Left colon (tissue), 2 donors: ENCODE measurements at regions of chr4 and their contacts with region 1.

Region 1: DNA sequence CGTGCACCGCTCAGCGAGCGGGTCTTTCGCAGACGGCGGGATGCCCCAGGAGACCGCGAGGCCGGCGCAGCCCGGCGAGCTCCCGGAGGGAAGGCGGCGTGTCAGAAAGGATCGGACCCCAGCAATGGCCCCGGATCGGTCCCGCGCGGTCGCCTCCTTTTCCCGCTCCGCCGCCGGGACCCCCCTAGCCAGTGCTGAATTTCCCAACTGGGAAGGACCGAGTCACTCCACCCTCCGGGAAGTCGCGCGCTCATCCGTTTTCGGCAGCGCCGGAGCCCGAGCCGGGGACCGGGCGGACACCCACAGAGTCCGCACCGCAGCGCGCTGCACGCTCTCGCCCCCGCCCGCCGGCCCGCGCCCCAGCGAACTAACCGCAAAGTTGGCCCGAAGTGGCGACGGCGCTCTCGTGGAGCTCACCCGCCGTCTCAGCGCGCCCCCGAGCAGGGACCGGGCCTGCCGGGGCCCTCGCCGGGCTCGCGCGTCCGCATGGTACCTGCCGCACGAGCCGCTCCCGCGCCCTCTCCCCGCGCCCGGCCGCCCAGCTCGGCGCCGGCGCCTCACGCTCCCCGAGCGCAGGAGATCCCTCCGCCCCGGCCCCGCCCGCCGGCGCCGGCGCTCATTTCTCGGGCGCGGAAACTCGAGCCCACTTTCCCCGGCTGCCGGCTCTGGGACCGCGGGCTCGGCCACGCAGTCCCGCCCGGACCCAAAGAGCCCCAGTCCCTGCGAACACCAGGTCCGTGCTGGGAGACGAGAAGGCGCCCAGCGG is at the start of gene FAT1:
- DNase-seq: peak; percentile 65 to 76
- ATAC-seq: peak; percentile 54
- total RNA-seq, gene FAT1: 291 to 299 TPM

Region 2: DNA sequence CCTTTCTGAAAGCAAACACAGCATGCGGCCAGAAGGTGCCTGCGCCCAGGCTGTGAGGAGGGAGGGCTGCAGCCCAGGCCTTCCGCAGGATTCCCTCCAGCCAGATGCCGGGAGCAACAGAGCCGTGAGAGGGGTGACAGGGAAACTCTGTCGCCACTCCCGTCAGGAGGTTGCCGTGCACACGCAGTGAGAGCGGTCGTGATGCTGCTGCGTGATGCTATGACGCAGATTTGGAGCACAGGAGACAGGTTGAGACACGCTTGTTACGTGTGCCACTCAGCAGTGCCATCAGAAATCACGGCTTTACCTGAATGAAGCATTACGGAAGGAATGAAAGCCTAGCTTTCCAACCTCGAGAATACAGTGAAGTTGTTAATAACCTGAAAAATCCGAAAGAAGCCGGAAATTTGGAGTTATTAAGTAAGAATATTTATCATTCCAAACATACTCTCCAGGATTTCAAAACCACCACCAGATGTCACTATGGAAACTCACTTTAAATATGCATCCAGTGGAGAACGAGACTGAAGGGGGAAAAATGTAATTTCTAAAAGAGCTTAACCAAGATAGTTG is 54.2 kb before region 1 on chr4:
- intact Hi-C with region 1: loop called in 1 of 2 experiments (anchors 5 kb)
- DNase-seq: no peak
- ATAC-seq: no peak